Activated CD8-positive, alpha-beta T cell treated with anti-CD3 and anti-CD28 coated beads, Interleukin-2, amount 10 ng/mL, durations not matched to agents 7 days and 5 days (primary cell): ENCODE measurements at regions of chr4 and their contacts with region 1.

Region 1: GRCh38 chr4:38902695-38903094 is 35.1 kb downstream of the FAM114A1 start:
- DNase-seq: no peak
- ATAC-seq: peak; percentile 76
- H3K4me3 Mint-ChIP-seq: no peak overlapping the region
- H3K27ac Mint-ChIP-seq: no peak overlapping the region
- H3K4me1 Mint-ChIP-seq: peaks cover 6% of the 10 kb centered on the region
- H3K27me3 Mint-ChIP-seq: peaks cover 5% of the 10 kb centered on the region

Region 2: GRCh38 chr4:38889143-38889542 is 13.6 kb before region 1 on chr4:
- CTCF ChIA-PET with region 1: interaction called, 14 read pairs
- POLR2A ChIA-PET with region 1: no interaction called
- DNase-seq: no peak
- ATAC-seq: peak; percentile 60
- H3K4me3 Mint-ChIP-seq: peak overlapping the region; percentile 16
- H3K27ac Mint-ChIP-seq: peak overlapping the region; percentile 33
- H3K4me1 Mint-ChIP-seq: peaks cover 16% of the 10 kb centered on the region
- H3K27me3 Mint-ChIP-seq: no peaks in the 10 kb centered on the region

Region 3: DNA sequence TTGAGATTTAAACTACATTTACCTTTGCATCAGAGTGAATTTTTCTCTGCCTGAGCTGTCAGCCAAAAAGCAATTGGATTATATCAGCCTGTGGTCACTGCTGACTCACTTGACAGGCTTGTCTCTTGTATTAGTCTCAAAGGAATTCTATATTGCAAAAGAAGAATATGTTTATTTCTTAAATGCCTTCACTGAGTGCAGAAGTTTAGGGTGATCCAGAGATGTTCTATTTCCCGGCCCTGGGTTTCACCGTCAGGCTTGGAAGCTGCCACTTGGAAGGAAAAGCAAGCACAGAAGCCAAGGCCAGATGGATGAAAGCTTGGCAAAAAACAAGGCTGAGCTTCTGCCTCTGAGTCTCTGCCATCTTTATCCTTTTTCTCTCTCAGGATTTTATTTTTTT is 45.9 kb after region 1 on chr4:
- CTCF ChIA-PET with region 1: interaction called, 14 read pairs
- POLR2A ChIA-PET with region 1: no interaction called
- DNase-seq: no peak
- ATAC-seq: no peak
- H3K4me3 Mint-ChIP-seq: no peak overlapping the region
- H3K27ac Mint-ChIP-seq: no peak overlapping the region
- H3K4me1 Mint-ChIP-seq: peaks cover 24% of the 10 kb centered on the region
- H3K27me3 Mint-ChIP-seq: peaks cover 11% of the 10 kb centered on the region

Region 4: GRCh38 chr4:39014028-39014427 is 111.3 kb after region 1 on chr4:
- CTCF ChIA-PET with region 1: no interaction called
- POLR2A ChIA-PET with region 1: no interaction called
- DNase-seq: no peak
- ATAC-seq: no peak
- H3K4me3 Mint-ChIP-seq: no peak overlapping the region
- H3K27ac Mint-ChIP-seq: no peak overlapping the region
- H3K4me1 Mint-ChIP-seq: no peaks in the 10 kb centered on the region
- H3K27me3 Mint-ChIP-seq: no peaks in the 10 kb centered on the region

Region 5: DNA sequence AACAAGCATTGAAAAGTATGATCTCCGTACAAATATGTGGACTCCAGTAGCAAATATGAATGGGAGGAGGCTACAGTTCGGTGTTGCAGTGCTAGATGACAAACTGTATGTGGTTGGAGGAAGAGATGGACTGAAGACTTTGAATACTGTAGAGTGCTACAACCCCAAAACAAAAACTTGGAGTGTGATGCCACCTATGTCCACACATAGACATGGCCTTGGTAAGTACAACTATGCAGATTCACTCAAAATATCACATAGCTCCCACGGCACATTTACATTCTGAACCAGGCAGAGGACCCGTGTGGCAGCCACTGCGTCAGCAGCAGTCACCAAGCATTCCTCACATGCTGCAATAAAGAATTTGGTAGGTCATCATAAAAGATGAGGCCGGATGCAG is 200.6 kb after region 1 on chr4:
- CTCF ChIA-PET with region 1: interaction called, 10 read pairs
- POLR2A ChIA-PET with region 1: no interaction called
- DNase-seq: no peak
- ATAC-seq: no peak
- H3K4me3 Mint-ChIP-seq: no peak overlapping the region
- H3K27ac Mint-ChIP-seq: no peak overlapping the region
- H3K4me1 Mint-ChIP-seq: no peaks in the 10 kb centered on the region
- H3K27me3 Mint-ChIP-seq: no peaks in the 10 kb centered on the region